ENCODE measurements at regions of chr21 and their contacts with region 1.

Region 1: GRCh38 chr21:45596704-45597318 is 46.7 kb upstream of the PCBP3 start:
- DNase-seq: peak; percentile 73 to 80
- H3K4me3 ChIP-seq: no peak overlapping the region
- H3K4me3 Mint-ChIP-seq: no peak overlapping the region
- H3K27ac Mint-ChIP-seq: no peak overlapping the region
- H3K4me1 ChIP-seq: no peaks in the 10 kb centered on the region
- H3K4me1 Mint-ChIP-seq: no peaks in the 10 kb centered on the region
- H3K27me3 ChIP-seq: no peaks in the 10 kb centered on the region
- H3K27me3 Mint-ChIP-seq: peaks cover 14% of the 10 kb centered on the region
- CTCF ChIP-seq: peak; percentile 80 to 89

Region 2: DNA sequence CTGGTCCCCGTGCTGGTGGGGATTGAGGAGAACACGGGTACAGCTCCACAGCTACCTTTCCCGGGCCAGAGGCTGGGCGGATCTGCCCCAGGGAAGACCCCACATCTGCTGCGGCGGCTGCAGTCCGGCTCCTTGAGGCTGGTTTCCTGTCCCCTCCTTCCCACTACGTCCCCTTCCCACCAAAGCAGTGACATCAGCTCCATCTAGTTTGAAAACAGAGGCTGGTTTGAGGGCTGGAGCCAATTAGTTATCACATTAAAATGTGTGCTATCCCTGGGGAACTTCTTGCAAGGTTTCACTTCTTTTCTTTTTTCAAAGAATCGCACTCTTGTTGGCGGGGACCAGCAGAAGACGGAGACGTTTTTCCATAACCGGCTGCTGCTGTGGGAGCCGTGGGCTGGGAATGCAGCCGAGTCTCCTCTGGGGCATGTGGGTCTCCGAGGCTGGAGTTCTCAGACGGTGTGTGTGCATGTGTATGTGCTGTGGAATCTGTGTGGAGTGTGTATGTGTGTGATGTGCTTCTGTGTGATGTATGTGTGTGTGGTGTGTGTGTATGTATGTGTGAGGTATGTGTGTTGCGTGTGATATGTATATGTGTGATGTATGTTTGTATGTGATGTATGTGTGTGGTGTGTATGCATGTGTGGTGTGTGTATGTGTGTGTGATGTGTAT is 37.8 kb after region 1 on chr21:
- CTCF ChIA-PET with region 1: no interaction called
- POLR2A ChIA-PET with region 1: no interaction called
- intact Hi-C with region 1: no loop called
- DNase-seq: no peak
- H3K4me3 ChIP-seq: no peak overlapping the region
- H3K4me3 Mint-ChIP-seq: no peak overlapping the region
- H3K27ac Mint-ChIP-seq: no peak overlapping the region
- H3K4me1 ChIP-seq: no peaks in the 10 kb centered on the region
- H3K4me1 Mint-ChIP-seq: no peaks in the 10 kb centered on the region
- H3K27me3 ChIP-seq: no peaks in the 10 kb centered on the region
- H3K27me3 Mint-ChIP-seq: no peaks in the 10 kb centered on the region
- CTCF ChIP-seq: no peak

Region 3: DNA sequence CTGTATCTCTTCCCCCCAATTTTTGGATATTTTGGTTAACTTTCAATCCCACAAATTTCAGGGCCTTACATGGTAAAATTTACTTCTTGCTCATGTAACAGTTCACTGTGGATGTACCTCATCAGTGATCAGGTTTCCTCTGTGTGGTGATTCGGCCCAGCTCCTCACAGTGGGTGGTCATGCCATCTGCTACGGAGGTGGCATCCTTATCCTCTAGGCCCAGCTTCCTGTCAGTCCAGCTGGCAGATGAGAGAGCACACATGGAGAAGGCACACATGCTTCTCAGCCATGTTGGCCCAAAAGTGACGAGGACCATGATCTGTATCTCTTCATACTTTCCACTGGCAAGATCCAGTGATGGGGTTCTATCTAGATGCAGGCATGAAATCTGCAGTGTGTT is 73.9 kb after region 1 on chr21:
- CTCF ChIA-PET with region 1: no interaction called
- POLR2A ChIA-PET with region 1: no interaction called
- intact Hi-C with region 1: no loop called
- DNase-seq: no peak
- H3K4me3 ChIP-seq: no peak overlapping the region
- H3K4me3 Mint-ChIP-seq: no peak overlapping the region
- H3K27ac Mint-ChIP-seq: no peak overlapping the region
- H3K4me1 ChIP-seq: no peaks in the 10 kb centered on the region
- H3K4me1 Mint-ChIP-seq: no peaks in the 10 kb centered on the region
- H3K27me3 ChIP-seq: no peaks in the 10 kb centered on the region
- H3K27me3 Mint-ChIP-seq: peaks cover 23% of the 10 kb centered on the region
- CTCF ChIP-seq: no peak

Region 4: GRCh38 chr21:45820171-45821091 is 223.6 kb after region 1 on chr21:
- CTCF ChIA-PET with region 1: interaction called, 7 read pairs
- POLR2A ChIA-PET with region 1: no interaction called
- intact Hi-C with region 1: loop called (anchors 1 kb)
- DNase-seq: peak; percentile 82
- H3K4me3 ChIP-seq: no peak overlapping the region
- H3K4me3 Mint-ChIP-seq: no peak overlapping the region
- H3K27ac Mint-ChIP-seq: no peak overlapping the region
- H3K4me1 ChIP-seq: peaks cover 5% of the 10 kb centered on the region; the same call in 1 of the 2 replicates
- H3K4me1 Mint-ChIP-seq: peaks cover 9% of the 10 kb centered on the region
- H3K27me3 ChIP-seq: no peaks in the 10 kb centered on the region
- H3K27me3 Mint-ChIP-seq: peaks cover 24% of the 10 kb centered on the region
- CTCF ChIP-seq: peak; percentile 82 to 84